GM10248 (cell line): ENCODE measurements at regions of chr5 and their contacts with region 1.

Region 1: GRCh38 chr5:139633295-139634027 is 14.7 kb upstream of the CXXC5 start:
- DNase-seq: peak; percentile 75
- CTCF ChIP-seq: peak; percentile 99

Region 2: GRCh38 chr5:139592289-139592688 is 41.2 kb before region 1 on chr5:
- CTCF ChIA-PET with region 1: interaction called, 14 read pairs
- POLR2A ChIA-PET with region 1: no interaction called
- DNase-seq: peak; percentile 26
- CTCF ChIP-seq: no peak

Region 3: GRCh38 chr5:139619861-139620260 is 13.6 kb before region 1 on chr5:
- CTCF ChIA-PET with region 1: interaction called, 85 read pairs
- POLR2A ChIA-PET with region 1: no interaction called
- DNase-seq: no peak
- CTCF ChIP-seq: no peak

Region 4: DNA sequence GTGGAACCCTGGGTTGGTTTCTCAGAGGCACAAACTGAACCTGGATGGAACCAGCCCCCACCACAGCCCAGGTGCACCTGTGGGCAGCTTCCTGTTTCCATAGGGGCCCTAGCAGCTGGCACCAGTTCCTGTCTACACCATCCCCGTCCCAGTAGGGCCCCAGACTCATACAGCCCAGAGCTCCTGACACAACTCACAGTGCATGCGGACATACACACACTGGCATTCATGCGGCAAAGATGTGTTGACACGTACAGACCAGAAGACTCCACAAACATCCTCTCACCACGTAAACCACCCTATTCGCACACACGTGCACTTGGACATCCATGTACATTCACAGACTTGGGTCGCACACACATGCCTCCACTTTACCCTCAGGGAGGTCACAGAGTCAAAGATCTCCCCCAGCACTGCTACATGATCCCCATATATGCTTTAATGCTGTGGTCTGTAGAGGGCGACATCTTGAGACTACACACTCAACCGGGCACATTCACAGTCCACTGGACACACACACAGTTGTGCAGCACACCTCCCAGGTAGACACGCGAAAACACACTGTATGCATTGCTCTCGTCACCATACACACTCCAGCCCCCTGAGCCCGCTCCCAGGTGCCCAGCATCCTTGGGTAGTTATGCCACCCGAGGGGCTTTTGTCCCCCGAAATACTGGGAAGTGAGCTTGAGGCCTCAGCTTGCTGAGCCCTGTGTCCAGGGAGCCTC is 37.1 kb after region 1 on chr5:
- CTCF ChIA-PET with region 1: interaction called, 136 read pairs
- POLR2A ChIA-PET with region 1: interaction called, 4 read pairs
- DNase-seq: peak; percentile 74
- CTCF ChIP-seq: peak; percentile 45

Region 5: DNA sequence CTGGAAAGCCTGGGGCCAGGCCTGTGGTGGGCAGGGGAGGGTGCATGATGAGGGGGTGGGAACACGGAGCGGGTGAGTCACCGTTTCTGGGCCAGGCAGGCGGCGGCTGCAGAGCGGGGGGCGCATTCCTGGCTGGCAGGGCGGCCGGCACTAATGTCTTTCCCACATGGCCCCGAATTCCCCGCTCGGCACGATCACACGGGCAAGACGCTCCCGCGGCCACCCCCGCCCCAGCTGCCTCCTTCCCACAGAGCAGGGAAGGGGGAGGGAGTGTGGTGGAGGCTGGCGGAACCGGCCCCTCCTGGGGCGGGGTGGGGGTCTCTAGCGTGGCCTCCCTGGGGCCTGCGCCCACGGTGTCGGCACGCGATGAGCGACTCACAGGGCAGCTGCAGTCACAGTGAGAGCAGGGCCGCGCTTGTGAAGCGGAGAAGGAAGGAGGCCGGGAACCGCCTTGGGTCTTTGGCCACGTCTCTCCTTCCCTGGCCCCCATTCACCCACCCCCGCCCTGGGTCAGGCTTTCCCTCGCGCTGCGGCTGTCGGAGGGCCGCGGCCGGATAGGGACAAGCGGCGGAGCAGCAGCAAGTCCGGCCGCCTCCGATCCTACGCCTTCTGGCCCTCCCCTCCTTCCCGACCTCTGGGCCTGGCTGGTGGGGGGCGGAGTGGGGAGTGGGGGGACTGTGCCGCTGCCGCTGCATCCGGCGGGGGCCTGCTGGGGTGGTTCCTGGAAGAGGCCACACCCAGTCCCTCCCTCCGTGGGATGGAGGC is 63.6 kb after region 1 on chr5:
- CTCF ChIA-PET with region 1: interaction called, 288 read pairs
- POLR2A ChIA-PET with region 1: no interaction called
- DNase-seq: peak; percentile 61
- CTCF ChIP-seq: no peak

Region 6: DNA sequence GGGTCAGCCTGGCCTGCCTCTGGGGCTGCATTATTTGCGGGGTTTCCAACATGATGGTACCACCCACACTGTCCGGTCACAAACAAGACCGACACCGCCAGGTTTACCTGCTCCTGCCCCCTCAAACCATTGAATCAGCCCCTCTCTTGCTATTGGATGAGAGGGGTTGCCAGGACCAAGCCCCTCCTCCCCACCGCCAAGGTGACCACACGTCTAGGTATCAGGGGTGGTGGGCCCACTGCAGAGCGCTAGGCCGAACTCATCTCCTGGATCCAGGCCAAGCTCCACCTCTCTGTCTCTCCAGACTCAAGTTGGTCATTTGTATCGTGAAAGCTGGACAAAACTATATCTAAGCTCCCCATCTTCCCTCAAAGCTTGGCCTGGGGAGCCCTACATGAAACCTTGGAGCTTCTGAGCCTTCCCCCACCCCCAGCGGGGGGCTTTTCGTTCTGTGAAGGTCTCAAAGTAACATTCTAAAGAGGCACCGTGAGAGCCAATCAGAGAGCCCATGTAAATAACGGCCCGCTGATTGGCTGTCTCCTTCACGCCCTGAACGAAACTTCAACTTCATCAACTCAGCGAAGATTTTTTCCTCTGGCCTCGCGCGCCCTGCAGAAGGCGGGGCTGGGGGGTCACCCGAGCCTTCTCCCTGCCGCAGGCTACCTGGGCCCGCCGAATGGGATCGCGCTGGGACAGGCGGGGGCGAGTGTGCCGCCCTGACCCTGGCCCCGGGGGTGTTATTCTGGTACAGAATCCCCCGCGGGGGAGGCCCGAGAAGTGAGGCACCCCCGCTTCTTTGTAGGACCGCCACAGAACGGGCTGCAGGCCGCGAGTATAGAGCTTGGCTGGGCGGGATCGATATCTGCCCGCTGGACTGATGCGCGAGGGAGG is 112.6 kb after region 1 on chr5:
- CTCF ChIA-PET with region 1: interaction called, 22 read pairs
- POLR2A ChIA-PET with region 1: no interaction called
- DNase-seq: peak; percentile 76
- CTCF ChIP-seq: no peak

Region 7: GRCh38 chr5:139787568-139788293 is 154.3 kb after region 1 on chr5:
- CTCF ChIA-PET with region 1: interaction called, 10 read pairs
- POLR2A ChIA-PET with region 1: no interaction called
- DNase-seq: peak; percentile 94
- CTCF ChIP-seq: peak; percentile 95